Activated T-helper 1 cell treated with anti-CD3 and anti-CD28 coated beads, Interleukin-12 subunit alpha, Interleukin-12 subunit beta, Interleukin-2, Interleukin-4 antibody, amounts not matched to agents 30 ng/mL and 10 ng/mL and 1 ng/mL, durations not matched to agents 14 hours and 24 hours and 36 hours (primary cell): ENCODE measurements at regions of chr1 and their contacts with region 1.

Region 1: GRCh38 chr1:40802078-40802741 is 18.6 kb downstream of the KCNQ4 start:
- DNase-seq: peak; percentile 80
- H3K4me3 Mint-ChIP-seq: peak overlapping the region; percentile 37
- H3K27ac Mint-ChIP-seq: peak overlapping the region; percentile 34
- H3K4me1 Mint-ChIP-seq: peaks cover 33% of the 10 kb centered on the region
- H3K27me3 Mint-ChIP-seq: peaks cover 2% of the 10 kb centered on the region

Region 2: GRCh38 chr1:39738622-39739366 is 1063.4 kb before region 1 on chr1 and contains the start of gene PPIE:
- intact Hi-C with region 1: no loop called
- DNase-seq: peak; percentile 83
- H3K4me3 Mint-ChIP-seq: peak within 1 kb of the TSS; percentile 96
- H3K27ac Mint-ChIP-seq: peak within 1 kb of the TSS; percentile 93
- H3K4me1 Mint-ChIP-seq: peaks cover 67% of the 10 kb centered on the region
- H3K27me3 Mint-ChIP-seq: no peaks in the 10 kb centered on the region
- total RNA-seq, gene PPIE: 68.1 and 75.0 TPM in 2 replicates

Region 3: GRCh38 chr1:40531381-40532061 is 270.7 kb before region 1 on chr1 and contains the start of gene ZNF684:
- intact Hi-C with region 1: no loop called
- DNase-seq: peak; percentile 83
- H3K4me3 Mint-ChIP-seq: peak within 1 kb of the TSS; percentile 97
- H3K27ac Mint-ChIP-seq: peak within 1 kb of the TSS; percentile 88
- H3K4me1 Mint-ChIP-seq: peaks cover 26% of the 10 kb centered on the region
- H3K27me3 Mint-ChIP-seq: peaks cover 2% of the 10 kb centered on the region
- total RNA-seq, gene ZNF684: 4.9 and 6.0 TPM in 2 replicates

Region 4: GRCh38 chr1:40818264-40818961 is 16.2 kb after region 1 on chr1:
- intact Hi-C with region 1: loop called (anchors 1 kb)
- DNase-seq: peak; percentile 89
- H3K4me3 Mint-ChIP-seq: peak overlapping the region; percentile 66
- H3K27ac Mint-ChIP-seq: peak overlapping the region; percentile 52
- H3K4me1 Mint-ChIP-seq: peaks cover 4% of the 10 kb centered on the region
- H3K27me3 Mint-ChIP-seq: peaks cover 9% of the 10 kb centered on the region

Region 5: DNA sequence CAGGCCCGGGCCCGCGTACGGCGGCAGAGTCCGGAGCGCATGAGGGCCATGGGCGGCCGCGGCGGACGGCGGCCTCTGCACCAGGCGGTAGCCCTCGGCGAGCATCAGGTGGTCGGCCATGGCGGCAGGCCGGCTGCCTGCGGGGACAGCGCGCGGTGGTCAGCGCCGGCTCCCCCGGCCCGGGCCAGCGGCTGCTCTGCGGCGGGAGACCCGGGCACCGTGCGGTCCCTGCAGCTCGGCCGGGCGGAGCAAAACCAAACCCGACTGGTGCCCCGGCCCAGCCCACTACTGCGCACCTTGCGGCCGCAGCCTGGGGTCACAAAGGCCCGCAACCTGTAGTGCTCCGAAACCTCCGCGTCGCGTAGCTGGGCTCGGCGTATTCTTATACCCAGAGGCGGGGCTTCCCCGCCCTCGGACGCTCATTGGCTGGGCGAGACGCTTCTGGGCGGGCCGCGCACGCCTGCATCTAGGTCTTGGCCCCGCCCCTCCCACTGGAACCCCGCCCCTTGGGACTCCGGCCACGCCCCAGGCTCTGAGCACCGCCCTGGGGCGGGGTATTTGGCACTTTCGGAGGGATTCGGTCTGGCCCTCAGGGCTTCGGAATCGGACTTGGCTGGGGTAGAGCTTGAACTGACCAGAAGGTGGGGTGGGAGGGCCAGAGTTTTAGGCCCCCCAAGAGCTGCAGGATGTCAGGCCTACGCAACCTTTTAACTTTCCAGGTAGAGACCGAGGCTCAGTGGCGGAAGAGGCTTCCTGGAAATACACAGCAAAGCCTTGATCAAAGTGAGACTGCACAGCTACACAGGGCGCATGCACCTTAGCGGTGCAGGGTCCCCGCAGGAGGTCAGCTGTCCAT is 60.0 kb after region 1 on chr1 and contains the start of gene CITED4:
- intact Hi-C with region 1: loop called (anchors 1 kb)
- DNase-seq: peak; percentile 95
- H3K4me3 Mint-ChIP-seq: peak within 1 kb of the TSS; percentile 92
- H3K27ac Mint-ChIP-seq: peak within 1 kb of the TSS; percentile 97
- H3K4me1 Mint-ChIP-seq: peaks cover 24% of the 10 kb centered on the region
- H3K27me3 Mint-ChIP-seq: peaks cover 35% of the 10 kb centered on the region
- total RNA-seq, gene CITED4: 4.1 and 5.0 TPM in 2 replicates

Region 6: DNA sequence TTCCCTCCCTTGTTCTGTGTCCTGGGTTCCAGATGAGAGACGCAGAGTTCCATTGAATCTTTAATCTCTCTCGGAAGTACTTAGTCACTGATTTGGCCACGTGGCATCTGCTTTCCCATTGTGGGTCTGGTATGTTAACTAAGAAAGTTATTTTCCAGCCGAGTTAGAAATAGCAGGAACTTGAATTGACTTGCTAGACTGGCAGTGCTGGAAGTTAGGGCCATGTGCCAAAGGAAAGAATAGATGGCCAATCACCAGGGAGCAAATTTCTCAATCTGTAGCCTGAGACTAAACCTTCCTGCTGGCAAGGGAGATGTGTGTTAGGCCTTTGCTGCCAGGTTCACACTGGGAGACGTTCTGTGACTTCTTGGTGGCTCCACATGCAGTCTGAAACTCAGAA is 243.5 kb after region 1 on chr1:
- intact Hi-C with region 1: no loop called
- DNase-seq: no peak
- H3K4me3 Mint-ChIP-seq: no peak overlapping the region
- H3K27ac Mint-ChIP-seq: no peak overlapping the region
- H3K4me1 Mint-ChIP-seq: peaks cover 12% of the 10 kb centered on the region
- H3K27me3 Mint-ChIP-seq: no peaks in the 10 kb centered on the region